ENCODE measurements at regions of chr13 and their contacts with region 1.

Region 1: DNA sequence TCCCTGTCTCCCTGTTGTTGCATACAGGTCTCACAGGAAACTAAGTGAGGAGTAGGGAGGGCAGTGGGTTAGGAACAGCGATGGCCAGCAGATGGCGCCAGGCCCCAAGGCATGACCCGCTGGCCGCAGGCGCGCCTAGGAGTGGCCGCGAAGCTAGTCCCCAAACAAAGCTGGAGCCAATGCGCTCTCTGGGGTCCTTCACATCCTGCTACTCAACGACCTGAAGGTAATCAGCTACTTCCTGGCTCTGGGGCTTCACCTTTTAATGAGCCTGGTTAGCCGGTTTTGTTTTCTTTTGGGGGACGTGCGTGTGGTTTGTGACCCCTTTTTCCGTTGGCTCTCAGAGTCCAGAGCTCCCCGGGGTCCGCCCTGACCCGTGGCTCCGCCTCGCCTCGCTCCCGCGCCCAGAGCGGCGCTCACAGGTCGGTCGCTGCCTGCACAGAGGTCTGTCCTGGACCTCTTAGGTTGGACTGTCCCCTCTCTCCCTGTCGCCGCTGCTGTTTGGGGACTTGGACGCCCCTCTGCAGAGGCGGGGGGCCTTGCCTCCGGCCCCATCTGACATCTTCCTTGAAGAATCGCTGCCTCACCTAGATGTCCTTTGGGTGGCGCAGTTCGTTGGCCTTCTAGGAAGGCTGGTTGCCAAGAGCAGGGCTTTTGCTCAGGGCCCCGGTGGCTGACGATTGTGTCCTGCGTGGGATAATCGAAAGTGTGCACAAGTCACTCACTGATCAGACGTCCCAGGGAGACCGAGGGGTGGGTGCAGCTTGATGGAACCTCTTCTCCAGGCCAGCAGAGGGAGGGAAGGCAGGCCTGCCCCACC is 62.1 kb upstream of the GTF3A start:
- DNase-seq: peak; percentile 88 to 95 (median 94)
- ATAC-seq: peak; percentile 99
- H3K4me3 ChIP-seq: no peak overlapping the region
- H3K4me1 ChIP-seq: no peaks in the 10 kb centered on the region
- CTCF ChIP-seq: peak; percentile 80

Region 2: DNA sequence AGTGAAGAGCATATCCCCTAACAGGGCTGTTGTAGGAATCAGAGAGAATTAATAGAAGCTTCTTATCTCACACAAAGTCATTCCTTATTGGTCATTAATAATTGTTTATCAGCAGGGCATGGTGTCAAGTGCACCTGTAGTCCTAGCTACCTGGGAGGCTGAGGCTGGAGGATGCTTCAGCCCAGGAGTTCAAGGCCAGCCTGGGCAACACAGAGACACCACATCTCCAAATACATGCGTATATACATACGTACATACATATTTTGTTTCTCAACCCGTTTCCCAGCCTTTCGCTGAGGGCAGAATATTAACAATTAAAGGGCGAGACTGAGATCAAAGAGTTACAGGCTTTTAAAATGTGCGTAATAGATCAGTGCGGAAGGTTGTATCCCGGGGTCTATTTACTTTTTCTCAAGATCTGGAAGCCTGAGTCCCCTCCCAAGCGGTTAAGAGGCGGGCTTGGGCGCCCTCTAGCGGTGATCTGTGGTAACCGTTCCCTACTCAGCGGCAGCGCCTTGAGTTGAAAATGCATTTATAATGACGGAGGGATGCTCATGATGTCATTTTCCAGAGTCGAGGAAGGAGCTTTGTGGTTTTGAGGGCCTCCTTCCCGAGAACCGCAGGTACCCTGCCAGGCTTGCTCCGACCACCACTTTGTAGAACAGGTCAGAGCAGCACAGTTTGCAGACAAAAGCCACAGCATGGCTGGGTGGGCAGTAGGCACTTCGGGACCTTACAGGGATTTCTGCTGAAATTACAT is 432.1 kb before region 1 on chr13:
- intact Hi-C with region 1: no loop called
- DNase-seq: peak in 2 of 3 donors; percentile 72 to 73
- ATAC-seq: peak; percentile 85
- H3K4me3 ChIP-seq: no peak overlapping the region
- H3K4me1 ChIP-seq: no peaks in the 10 kb centered on the region
- CTCF ChIP-seq: peak; percentile 89

Region 3: DNA sequence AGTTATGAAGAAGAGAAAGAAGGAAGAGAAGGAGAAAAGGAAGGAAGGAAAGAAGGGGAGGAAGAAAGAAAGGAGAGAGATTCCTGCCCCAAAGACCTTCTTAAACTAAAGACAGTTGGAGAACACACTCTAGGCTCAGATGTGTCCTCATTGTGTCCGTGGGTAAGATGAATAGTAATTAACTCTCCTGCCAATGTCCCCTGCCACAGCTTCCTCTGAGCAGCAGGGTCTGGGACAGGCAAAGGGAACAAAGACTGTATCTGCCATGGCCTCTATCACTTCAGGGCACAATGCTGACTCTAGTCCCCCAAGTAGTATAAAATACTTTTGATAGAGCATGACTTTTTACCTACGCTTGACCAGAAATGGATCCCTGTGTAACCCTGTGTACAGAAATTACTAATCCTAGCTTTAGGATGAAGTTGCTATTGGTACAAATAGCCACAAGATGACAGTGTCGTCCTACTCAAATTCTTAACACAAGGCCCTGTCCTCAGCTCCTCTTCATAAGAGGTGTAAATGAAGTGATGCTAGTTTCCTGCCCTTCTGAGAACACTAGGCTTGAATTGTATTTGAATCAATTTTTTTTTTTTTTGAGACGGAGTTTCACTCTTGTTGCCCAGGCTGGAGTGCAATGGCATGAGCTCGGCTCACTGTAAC is 415.5 kb before region 1 on chr13:
- intact Hi-C with region 1: loop called (anchors 2 to 10 kb)
- DNase-seq: no peak
- ATAC-seq: peak; percentile 37
- H3K4me3 ChIP-seq: no peak overlapping the region
- H3K4me1 ChIP-seq: peaks cover 22% of the 10 kb centered on the region
- CTCF ChIP-seq: peak; percentile 64

Region 4: DNA sequence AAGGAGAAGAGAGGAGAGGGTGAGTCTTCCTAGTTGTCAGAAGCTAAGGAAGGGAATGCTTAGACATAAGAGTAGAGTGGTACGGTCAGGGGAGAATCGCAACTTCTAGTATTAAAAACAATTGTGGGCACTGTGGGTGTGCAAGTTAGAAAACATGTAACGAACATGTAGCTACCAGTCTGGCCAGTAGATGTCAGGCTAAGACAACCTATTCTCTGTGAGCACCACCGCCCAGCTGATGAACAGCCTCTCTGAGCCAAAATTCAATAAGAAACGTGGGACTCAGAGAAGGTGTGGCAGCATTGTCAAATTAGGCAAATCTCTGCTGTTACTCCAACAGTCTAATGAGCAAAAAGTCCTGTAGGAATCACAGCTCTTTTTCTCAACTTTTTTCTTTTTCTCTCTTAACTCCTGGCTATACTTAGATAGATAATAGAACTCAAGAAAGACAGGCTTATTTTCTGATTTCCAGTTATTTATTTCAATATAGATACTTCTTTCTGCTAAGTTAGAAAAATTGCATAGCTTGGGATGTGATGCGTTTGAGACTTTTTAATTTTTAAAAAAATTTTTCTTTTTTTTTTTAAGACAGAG is 376.9 kb before region 1 on chr13:
- intact Hi-C with region 1: loop called (anchors 5 to 10 kb)
- DNase-seq: peak in 1 of 3 donors; percentile 94
- ATAC-seq: peak; percentile 70
- H3K4me3 ChIP-seq: no peak overlapping the region
- H3K4me1 ChIP-seq: peaks cover 33% of the 10 kb centered on the region
- CTCF ChIP-seq: peak; percentile 41

Region 5: DNA sequence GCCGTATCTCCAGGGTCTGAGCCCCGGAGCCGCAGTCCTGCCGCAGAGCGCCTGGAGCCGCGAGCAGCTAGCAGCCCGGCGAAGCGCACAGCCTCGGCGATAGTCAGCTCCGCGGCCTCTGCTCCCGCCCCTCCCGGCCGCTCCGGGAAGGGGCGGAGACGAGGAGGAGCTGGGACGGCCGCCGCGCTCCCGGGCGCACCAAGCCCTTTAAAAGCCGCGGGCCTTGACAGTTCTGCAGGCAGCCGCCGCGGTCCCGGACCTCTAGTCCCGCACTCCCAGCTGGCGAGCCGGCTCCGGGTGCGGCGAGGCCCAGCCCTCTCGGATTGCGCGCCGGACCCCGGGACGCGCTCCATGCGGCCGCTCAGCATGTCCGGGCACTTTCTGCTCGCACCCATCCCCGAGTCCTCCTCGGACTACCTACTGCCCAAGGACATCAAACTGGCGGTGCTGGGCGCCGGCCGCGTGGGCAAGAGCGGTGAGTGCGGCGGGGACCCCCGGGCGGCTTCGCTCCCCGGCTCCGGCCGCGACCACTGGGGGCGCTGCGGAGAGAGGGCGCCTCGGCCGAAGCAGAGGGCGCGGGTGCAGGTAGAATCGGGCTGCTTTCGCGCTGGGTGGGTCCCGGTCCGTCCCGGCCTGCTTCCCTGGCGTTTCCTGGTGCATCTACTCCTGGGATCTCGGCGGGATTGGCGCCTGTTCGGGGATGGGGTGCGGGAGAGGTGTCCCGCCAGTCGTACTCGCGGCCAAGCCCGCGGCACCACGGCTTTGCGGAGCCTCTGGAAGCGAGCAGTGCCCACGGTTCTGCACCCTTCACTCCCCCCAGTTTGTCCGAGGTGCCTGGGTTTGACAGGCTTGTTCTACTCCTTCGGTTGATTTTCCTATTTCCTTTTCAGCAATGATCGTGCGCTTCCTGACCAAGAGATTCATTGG is 91.4 kb before region 1 on chr13 and contains the start of gene RASL11A:
- intact Hi-C with region 1: loop called in 1 of 2 experiments (anchors 10 kb)
- DNase-seq: peak; percentile 85 to 93 (median 92)
- ATAC-seq: peak; percentile 96
- H3K4me3 ChIP-seq: peak within 1 kb of the TSS; percentile 65
- H3K4me1 ChIP-seq: peaks cover 15% of the 10 kb centered on the region
- CTCF ChIP-seq: peak; percentile 94
- total RNA-seq, gene RASL11A: 27.0 to 75.0 (median 34.9) TPM

Region 6: DNA sequence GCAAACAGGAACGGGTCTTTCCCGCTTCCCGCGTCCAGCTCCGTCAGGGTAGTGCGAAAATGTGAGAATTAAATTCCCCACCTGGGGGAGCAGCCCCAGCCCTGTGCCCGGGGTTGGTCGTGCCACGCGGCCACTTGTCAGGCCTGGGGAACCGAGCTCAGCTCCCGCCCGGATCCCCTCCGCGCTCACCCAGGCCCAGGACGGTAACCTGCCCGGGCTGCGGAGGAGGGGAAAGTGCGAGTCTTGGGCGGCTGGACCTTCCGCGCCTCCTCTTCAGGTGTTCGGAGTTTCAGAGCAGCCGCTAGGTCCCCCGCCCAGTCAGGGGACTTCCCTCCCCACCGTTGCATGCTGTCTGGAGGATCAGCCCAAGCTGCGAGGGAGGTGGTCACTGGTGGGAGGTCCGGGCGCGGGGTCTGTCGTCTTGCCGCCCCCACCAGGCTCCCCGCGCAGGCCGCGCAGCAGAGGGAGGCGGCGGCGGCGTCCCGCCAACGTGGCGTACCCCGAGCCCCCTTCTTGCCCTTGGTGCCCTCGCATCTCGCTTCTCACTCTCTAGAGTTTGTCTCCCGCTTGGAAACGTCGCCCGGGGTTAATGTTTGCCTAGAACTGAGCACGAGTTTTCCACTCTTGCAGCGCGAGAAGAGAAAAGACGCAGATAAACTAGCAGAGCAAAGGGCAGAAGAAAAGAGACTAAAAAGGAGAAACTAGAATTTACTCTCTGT is 618.2 kb after region 1 on chr13:
- intact Hi-C with region 1: loop called (anchors 5 to 10 kb)
- DNase-seq: peak; percentile 55 to 79 (median 74)
- ATAC-seq: peak; percentile 32
- H3K4me3 ChIP-seq: peak overlapping the region; percentile 21
- H3K4me1 ChIP-seq: no peaks in the 10 kb centered on the region
- CTCF ChIP-seq: no peak

Measured in mucosa of descending colon (tissue), 3 donors.